ENCODE measurements at regions of chr1 and their contacts with region 1.

Region 1: DNA sequence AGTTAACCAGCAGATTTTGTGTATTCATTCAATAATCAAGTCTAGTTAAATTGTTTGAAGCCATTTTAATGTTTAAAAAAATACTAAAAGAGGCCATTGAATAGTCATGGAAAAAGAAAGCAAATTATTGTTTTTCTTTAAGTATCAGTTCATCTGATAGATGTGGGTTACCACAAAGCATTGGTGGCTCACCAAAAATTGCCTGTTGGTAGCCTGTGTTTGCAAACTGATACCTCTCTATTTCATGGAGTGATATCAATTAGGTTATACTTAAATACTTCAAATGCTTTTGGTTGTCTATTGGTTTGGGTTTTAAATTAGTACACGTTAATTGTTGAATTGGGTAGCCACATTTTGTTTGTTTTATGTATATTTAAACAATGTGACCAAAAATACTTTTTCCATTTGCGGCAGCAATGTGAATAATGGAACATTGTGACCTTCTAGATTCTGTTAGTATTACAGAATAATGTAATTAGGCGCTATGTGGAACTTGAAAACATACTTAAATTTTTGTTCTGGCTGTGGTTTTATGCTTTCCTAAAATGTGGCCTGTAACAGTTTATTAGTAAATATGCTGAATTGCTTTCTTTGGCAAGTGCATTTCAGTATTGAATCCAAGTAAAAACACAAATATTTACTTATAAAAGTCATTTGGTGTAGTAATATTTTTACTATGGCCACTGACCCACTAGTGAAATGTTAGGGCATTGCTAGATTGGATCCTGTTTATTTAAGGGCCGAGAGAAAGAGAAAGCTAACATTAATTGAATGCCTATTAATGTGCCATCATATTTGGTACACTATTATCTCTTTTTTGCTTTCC is 37.1 kb upstream of the NBL1 start:
- DNase-seq: peak; percentile 69
- H3K4me3 Mint-ChIP-seq: no peak overlapping the region
- H3K27ac Mint-ChIP-seq: peak overlapping the region; percentile 75
- H3K4me1 Mint-ChIP-seq: peaks cover 57% of the 10 kb centered on the region
- H3K27me3 Mint-ChIP-seq: no peaks in the 10 kb centered on the region

Region 2: GRCh38 chr1:19643602-19644394 is 36.8 kb after region 1 on chr1 and contains the start of gene NBL1:
- CTCF ChIA-PET with region 1: no interaction called
- POLR2A ChIA-PET with region 1: no interaction called
- intact Hi-C with region 1: loop called (anchors 2 kb)
- DNase-seq: peak; percentile 78
- H3K4me3 Mint-ChIP-seq: peak within 1 kb of the TSS; percentile 87
- H3K27ac Mint-ChIP-seq: peak within 1 kb of the TSS; percentile 77
- H3K4me1 Mint-ChIP-seq: peaks cover 32% of the 10 kb centered on the region
- H3K27me3 Mint-ChIP-seq: peaks cover 9% of the 10 kb centered on the region
- total RNA-seq, gene NBL1: 25.0 to 31.3 TPM